Naive thymus-derived CD4-positive, alpha-beta T cell (primary cell): ENCODE measurements at regions of chr16 and their contacts with region 1.

Region 1: DNA sequence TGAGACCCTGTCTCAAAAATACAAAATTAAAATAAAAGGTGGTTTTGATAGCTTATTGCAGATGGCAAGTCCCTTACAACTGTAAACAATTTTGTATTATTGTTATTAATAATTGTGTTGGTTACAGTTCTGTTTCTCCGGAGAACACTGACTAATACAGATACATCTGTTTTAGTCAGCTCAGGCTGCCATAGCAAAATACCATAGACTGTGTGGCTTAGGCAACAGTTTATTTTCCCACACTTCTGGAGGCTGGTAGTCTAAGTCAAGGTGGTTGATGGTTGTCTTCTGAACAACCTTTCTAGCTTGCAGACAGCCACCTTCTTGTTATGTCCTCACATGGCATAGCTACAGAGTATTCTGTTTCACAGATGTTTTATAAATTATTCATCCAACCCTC is 14.2 kb upstream of the IL21R start:
- DNase-seq: peak in 1 of 9 donors; percentile 11
- ATAC-seq: no peak
- H3K4me3 ChIP-seq: no peak overlapping the region
- H3K4me3 Mint-ChIP-seq: no peak overlapping the region
- H3K27ac ChIP-seq: no peak overlapping the region
- H3K27ac Mint-ChIP-seq: no peak overlapping the region
- H3K4me1 ChIP-seq: no peaks in the 10 kb centered on the region
- H3K4me1 Mint-ChIP-seq: peaks cover 0 to 10% (median 6%) of the 10 kb centered on the region in 7 donors
- H3K27me3 ChIP-seq: no peaks in the 10 kb centered on the region
- H3K27me3 Mint-ChIP-seq: no peaks in the 10 kb centered on the region

Region 2: DNA sequence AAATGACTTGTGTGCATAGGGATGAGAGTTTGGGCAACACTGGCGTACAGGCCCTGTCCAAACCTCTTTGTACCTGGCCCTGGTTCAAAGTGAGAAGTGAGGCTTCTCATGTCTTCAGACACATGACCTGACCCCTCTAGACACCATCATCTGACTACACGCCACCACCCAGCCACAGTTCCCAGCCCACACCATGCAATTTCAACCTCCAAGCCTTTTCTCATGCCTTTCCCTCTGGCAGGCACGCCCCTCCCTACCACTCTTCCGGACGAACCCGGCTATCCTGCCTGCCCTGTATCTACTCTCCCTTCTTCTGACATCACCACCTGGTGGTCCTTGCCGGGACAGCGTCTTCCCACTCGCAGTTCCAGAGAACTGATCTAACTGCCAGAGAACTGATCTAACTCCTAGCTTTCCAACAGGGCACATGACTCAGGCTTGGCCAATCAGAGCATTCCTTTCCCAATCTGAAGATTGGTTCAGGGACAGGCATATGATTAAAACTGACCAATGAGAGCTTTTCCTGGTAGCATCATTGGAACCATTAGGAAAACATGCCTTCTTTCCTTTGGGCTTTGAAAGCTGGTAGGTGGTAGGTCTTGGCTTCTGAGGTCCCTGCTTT is 12.8 kb before region 1 on chr16:
- CTCF ChIA-PET with region 1: interaction called, 5 read pairs
- POLR2A ChIA-PET with region 1: interaction called, 15 read pairs
- intact Hi-C with region 1: no loop called
- DNase-seq: peak in 1 of 9 donors; percentile 50
- ATAC-seq: peak; percentile 64
- H3K4me3 ChIP-seq: no peak overlapping the region
- H3K4me3 Mint-ChIP-seq: no peak overlapping the region
- H3K27ac ChIP-seq: peak overlapping the region; percentile 53
- H3K27ac Mint-ChIP-seq: no peak overlapping the region
- H3K4me1 ChIP-seq: peaks cover 32 to 71% of the 10 kb centered on the region in 2 donors
- H3K4me1 Mint-ChIP-seq: peaks cover 29 to 53% (median 45%) of the 10 kb centered on the region in 7 donors
- H3K27me3 ChIP-seq: no peaks in the 10 kb centered on the region
- H3K27me3 Mint-ChIP-seq: no peaks in the 10 kb centered on the region

Region 3: DNA sequence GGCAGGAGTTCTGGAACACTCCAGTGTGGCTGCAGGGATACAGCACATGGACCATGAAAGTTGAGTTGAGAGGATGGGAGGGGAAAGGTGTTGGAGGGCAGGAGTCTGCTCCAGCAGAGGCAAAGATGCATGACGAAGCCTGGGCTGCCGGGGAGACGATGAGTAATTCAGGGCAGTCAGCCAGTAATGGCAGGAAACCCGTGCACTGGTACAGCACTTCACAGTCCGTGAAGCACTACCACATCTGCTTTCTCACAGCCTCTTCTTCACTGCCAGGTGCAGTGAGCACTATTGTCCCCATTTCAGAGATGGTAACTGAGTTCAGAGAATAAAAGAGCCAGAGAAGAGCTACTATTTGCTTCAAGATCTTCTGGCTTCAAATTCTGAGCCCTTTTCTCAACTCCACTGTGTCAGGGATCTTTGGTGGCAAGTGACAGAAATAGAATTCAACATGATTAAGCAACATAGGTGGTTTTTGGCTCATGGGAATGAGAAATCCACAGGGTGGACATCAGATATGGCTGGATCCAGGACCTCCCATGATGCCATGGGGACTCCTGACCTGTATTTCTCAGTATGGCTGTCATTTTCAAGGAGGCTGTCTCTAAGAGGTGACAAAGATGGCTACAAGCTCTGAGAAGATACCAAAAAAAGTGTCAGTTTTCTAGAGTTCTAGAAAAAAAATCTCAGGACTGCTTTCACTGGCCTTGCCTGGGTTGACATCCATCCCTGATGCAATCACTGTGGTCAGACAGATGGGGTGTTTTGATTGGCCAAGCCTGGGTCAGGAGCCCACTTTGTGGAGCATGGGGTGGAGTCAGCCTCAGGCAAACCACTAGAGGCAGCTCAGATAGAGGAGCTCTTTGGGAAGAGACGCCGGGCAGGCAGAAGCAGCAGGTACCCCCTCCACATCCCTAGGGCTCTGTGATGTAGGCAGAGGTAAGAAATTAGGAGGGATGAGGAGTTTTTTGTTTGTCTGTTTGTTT is 39.0 kb after region 1 on chr16:
- CTCF ChIA-PET with region 1: no interaction called
- POLR2A ChIA-PET with region 1: no interaction called
- intact Hi-C with region 1: loop called in 1 of 2 experiments (anchors 1 kb)
- DNase-seq: peak in 8 of 9 donors; percentile 25 to 68 (median 55)
- ATAC-seq: peak; percentile 93
- H3K4me3 ChIP-seq: no peak overlapping the region
- H3K4me3 Mint-ChIP-seq: peak overlapping the region in 9 of 10 donors; percentile 9 to 70 (median 18)
- H3K27ac ChIP-seq: peak overlapping the region; percentile 22
- H3K27ac Mint-ChIP-seq: peak overlapping the region; percentile 30 to 86 (median 72)
- H3K4me1 ChIP-seq: peaks cover 15 to 21% of the 10 kb centered on the region in 2 donors
- H3K4me1 Mint-ChIP-seq: peaks cover 29 to 78% (median 62%) of the 10 kb centered on the region in 7 donors
- H3K27me3 ChIP-seq: no peaks in the 10 kb centered on the region
- H3K27me3 Mint-ChIP-seq: no peaks in the 10 kb centered on the region